Breast epithelium (tissue), 4 donors: ENCODE measurements at regions of chr2 and their contacts with region 1.

Region 1: GRCh38 chr2:133086176-133086575 is 416.2 kb upstream of the LYPD1 start:
- DNase-seq: no peak
- H3K4me3 ChIP-seq: no peak overlapping the region
- H3K27ac ChIP-seq: no peak overlapping the region
- H3K4me1 ChIP-seq: no peaks in the 10 kb centered on the region
- H3K27me3 ChIP-seq: no peaks in the 10 kb centered on the region
- CTCF ChIP-seq: no peak
- POLR2A ChIP-seq: no peak

Region 2: DNA sequence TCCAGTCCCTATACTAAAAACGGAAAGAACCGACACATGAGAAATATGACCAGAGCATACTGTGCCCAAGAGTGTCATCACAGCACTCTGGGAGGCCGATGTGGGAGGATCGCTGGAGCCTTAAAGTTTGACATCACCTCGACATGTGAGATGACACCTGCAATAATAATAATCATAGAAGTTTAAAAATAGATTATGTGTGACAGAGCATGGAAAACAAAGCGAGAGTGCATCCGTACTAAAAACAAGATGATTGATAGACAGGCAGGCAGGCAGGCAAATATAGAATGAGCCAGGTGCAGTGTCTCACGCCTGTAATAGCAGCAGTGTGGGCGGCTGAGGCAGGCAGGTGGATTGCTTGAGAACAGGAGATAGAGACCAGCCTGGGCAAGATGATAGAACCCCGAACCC is 809.6 kb before region 1 on chr2:
- intact Hi-C with region 1: no loop called
- DNase-seq: no peak
- H3K4me3 ChIP-seq: no peak overlapping the region
- H3K27ac ChIP-seq: no peak overlapping the region
- H3K4me1 ChIP-seq: no peaks in the 10 kb centered on the region
- H3K27me3 ChIP-seq: no peaks in the 10 kb centered on the region
- CTCF ChIP-seq: no peak
- POLR2A ChIP-seq: no peak

Region 3: DNA sequence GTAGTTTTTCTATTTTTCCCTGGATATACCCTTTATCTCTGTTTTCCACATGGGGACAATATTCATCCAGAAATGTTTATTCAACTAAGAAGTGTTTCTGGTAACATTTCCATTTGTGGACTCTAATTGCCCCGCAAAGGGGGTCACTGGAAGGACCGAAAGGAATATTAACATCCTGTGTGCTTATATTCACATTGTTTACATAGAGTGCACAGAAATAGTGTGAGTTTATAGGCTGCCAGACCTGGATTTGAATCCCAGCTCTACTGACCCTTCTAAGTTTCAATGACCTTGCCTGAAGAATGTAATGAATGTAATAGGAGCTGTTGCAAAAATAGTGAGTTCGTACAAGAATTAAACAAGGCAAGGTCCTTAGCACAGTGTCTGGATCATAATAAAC is 634.9 kb after region 1 on chr2:
- intact Hi-C with region 1: loop called (anchors 5 kb)
- DNase-seq: no peak
- H3K4me3 ChIP-seq: no peak overlapping the region
- H3K27ac ChIP-seq: no peak overlapping the region
- H3K4me1 ChIP-seq: no peaks in the 10 kb centered on the region
- H3K27me3 ChIP-seq: no peaks in the 10 kb centered on the region
- CTCF ChIP-seq: no peak
- POLR2A ChIP-seq: no peak